Activated CD8-positive, alpha-beta memory T cell treated with anti-CD3 and anti-CD28 coated beads, Interleukin-2, amount 10 ng/mL, durations not matched to agents 7 days and 5 days (primary cell): ENCODE measurements at regions of chr16 and their contacts with region 1.

Region 1: DNA sequence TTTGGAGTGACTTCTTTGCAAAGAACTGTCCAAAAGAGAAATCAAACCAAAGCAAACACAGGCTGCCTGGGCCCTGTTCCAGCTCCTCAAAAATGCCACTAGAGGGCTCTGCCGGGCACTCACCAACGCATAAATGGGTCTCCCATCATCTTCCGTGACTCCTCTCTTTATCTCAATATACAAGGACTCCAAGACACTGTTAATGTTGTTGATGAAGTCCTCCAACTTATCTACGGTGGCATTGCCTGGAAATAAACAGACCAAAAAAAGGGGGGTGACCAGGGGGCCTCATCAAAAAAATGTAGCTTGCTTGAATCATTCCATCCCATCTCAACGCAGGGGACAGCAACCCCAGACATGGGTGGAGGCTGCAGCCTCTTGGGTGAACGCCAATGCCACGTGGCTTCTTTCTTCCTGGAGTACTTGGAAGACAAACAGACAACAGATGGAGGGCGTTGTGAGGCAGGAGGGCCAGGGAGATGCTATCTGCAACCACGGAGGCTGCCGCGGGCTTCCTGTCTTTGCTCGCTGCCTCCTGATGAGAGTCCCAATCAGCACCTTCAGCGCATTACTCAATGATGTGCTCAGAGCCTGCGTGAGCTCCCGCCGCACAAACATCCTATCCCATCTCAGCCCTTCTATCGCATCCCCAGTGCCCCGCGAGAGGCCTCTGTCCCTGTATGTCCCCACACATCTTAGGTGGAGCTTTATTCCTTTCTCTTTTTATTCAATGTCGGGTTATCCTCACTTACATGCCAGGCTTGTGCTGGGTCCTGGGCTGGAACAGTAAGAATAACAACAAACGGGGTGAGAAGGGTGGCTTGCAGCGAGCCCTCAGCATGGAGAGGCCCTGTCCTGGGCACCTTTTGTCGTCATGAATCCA is 32.0 kb downstream of the KDM8 start:
- DNase-seq: peak; percentile 97
- ATAC-seq: peak; percentile 67
- H3K4me3 Mint-ChIP-seq: peak overlapping the region; percentile 62
- H3K27ac Mint-ChIP-seq: peak overlapping the region; percentile 94
- H3K4me1 Mint-ChIP-seq: peaks cover 88% of the 10 kb centered on the region
- H3K27me3 Mint-ChIP-seq: no peaks in the 10 kb centered on the region

Region 2: DNA sequence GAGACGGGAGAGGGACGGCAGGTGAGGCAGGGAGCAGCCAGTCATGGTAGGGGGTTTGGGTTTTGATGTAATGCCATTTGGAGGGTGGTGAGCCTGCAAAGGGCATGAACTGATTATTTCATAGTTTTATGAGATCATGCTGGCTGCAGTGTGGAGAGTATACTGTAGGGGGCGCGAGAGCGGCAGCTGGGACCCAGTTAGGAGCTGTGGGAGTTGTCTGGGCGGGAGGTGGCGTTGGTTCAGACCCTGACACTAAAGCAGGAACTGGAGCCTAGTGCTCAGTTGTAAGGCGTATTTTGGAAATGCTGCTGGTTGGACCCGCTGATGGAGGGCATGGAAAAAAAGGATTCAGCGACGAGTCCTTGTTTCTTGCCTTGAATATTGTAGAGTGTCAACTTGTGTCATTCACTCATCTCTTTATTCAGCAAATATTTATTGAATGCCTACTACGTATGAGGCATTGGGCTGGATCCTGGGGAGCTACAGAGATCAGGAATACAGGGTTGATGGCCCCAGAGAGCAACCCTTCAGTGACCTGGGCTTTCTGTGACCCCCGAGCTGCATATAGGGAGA is 55.7 kb before region 1 on chr16:
- CTCF ChIA-PET with region 1: interaction called, 64 read pairs
- DNase-seq: peak; percentile 93
- ATAC-seq: peak; percentile 98
- H3K4me3 Mint-ChIP-seq: no peak overlapping the region
- H3K27ac Mint-ChIP-seq: peak overlapping the region; percentile 65
- H3K4me1 Mint-ChIP-seq: peaks cover 23% of the 10 kb centered on the region
- H3K27me3 Mint-ChIP-seq: peaks cover 13% of the 10 kb centered on the region

Region 3: GRCh38 chr16:27251541-27252205 is 16.4 kb after region 1 on chr16:
- CTCF ChIA-PET with region 1: interaction called, 26 read pairs
- DNase-seq: peak; percentile 38
- ATAC-seq: no peak
- H3K4me3 Mint-ChIP-seq: no peak overlapping the region
- H3K27ac Mint-ChIP-seq: no peak overlapping the region
- H3K4me1 Mint-ChIP-seq: peaks cover 66% of the 10 kb centered on the region
- H3K27me3 Mint-ChIP-seq: no peaks in the 10 kb centered on the region

Region 4: GRCh38 chr16:27314161-27314723 is 78.9 kb after region 1 on chr16:
- CTCF ChIA-PET with region 1: interaction called, 116 read pairs
- DNase-seq: peak; percentile 85
- ATAC-seq: peak; percentile 37
- H3K4me3 Mint-ChIP-seq: peak overlapping the region; percentile 94
- H3K27ac Mint-ChIP-seq: peak overlapping the region; percentile 94
- H3K4me1 Mint-ChIP-seq: peaks cover 48% of the 10 kb centered on the region
- H3K27me3 Mint-ChIP-seq: no peaks in the 10 kb centered on the region

Region 5: GRCh38 chr16:27374804-27375425 is 139.6 kb after region 1 on chr16:
- CTCF ChIA-PET with region 1: interaction called, 92 read pairs
- DNase-seq: peak; percentile 71
- ATAC-seq: peak; percentile 48
- H3K4me3 Mint-ChIP-seq: no peak overlapping the region
- H3K27ac Mint-ChIP-seq: no peak overlapping the region
- H3K4me1 Mint-ChIP-seq: peaks cover 27% of the 10 kb centered on the region
- H3K27me3 Mint-ChIP-seq: no peaks in the 10 kb centered on the region